Activated CD4-positive, alpha-beta T cell treated with anti-CD3 and anti-CD28 coated beads for 36 hours (primary cell): ENCODE measurements at regions of chr10 and their contacts with region 1.

Region 1: DNA sequence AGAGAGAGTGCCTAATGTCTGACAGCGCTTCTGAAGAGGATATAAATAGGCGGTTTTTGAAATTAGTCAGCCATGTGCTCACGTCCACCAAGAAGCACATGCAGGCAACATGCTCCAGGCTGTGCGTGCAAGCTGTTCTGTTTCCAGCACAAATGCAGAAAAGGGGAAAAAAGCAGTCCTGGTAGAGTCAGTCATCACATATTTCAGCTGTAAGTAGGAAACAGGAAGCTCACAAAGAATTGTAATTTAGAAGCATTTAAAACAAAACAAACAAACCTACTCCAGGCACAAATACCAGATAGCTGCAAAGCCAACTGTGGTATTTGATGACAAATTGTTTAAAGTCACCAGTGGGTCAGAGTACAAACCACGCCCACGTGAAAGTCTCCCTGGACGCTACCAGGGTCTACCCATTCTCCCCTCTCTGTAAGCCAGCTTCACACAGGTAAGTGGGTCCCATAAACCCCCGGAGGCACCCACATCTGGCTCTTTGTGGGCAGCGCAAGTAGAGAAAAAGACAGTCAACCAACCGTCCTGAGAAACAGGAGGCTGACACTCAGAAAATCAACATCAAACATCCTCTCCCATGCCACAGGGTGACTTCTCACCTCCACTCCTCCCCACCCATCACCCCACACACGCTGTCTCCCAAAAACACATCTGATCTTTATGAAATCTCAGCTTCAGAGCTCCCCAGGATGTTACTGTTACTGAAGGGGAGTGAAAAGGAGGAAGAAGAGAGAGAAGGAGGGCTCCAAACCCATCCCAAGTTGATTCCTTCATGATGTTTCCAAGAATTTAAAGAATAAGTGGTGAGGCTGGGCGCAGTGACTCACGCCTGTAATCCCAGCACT is 186.4 kb downstream of the FAM107B start:
- DNase-seq: peak; percentile 77
- ATAC-seq: peak; percentile 70
- H3K4me3 Mint-ChIP-seq: peak overlapping the region; percentile 40
- H3K27ac Mint-ChIP-seq: peak overlapping the region; percentile 89
- H3K4me1 Mint-ChIP-seq: peaks cover 93% of the 10 kb centered on the region
- H3K27me3 Mint-ChIP-seq: no peaks in the 10 kb centered on the region

Region 2: GRCh38 chr10:14564268-14564744 is 24.0 kb before region 1 on chr10:
- CTCF ChIA-PET with region 1: interaction called, 6 read pairs
- POLR2A ChIA-PET with region 1: interaction called, 5 read pairs
- intact Hi-C with region 1: loop called (anchors 1 to 2 kb)
- DNase-seq: no peak
- ATAC-seq: peak; percentile 40
- H3K4me3 Mint-ChIP-seq: peak overlapping the region; percentile 67
- H3K27ac Mint-ChIP-seq: peak overlapping the region; percentile 96
- H3K4me1 Mint-ChIP-seq: peaks cover 92% of the 10 kb centered on the region
- H3K27me3 Mint-ChIP-seq: no peaks in the 10 kb centered on the region

Region 3: DNA sequence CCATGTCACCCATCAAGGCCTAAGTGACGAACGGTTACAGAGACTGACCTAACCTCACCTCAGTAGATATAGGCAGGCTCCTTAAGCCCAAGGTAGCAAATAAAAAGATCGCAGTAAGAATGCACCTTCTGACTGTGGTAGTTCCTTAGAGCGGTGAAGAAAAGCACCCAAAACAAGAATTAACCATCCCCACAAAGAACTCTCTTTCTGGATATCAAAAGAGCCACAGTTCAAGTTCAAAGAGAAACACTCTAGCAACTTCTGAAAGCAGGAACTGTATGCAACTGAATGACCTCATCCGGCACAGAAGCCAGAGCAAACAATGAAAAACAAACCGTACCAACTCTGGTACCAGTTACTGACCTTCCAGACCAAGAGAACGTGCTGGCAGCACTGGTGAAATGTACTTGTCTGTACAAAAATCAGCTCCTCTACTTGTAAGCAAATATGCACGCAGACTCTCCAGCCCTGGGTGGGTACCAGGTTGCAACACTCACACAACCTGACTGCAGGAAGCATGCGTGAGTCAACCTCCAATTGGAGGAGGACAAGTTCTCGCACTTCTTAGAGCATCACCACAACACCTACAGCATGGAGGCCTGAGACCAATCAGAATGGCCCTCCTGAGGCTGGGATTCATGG is 16.3 kb before region 1 on chr10:
- CTCF ChIA-PET with region 1: interaction called, 7 read pairs
- POLR2A ChIA-PET with region 1: interaction called, 8 read pairs
- intact Hi-C with region 1: loop called (anchors 1 kb)
- DNase-seq: peak; percentile 78
- ATAC-seq: peak; percentile 88
- H3K4me3 Mint-ChIP-seq: peak overlapping the region; percentile 66
- H3K27ac Mint-ChIP-seq: peak overlapping the region; percentile 93
- H3K4me1 Mint-ChIP-seq: peaks cover 93% of the 10 kb centered on the region
- H3K27me3 Mint-ChIP-seq: no peaks in the 10 kb centered on the region

Region 4: GRCh38 chr10:14598809-14599764 is 10.8 kb after region 1 on chr10:
- CTCF ChIA-PET with region 1: interaction called, 11 read pairs
- POLR2A ChIA-PET with region 1: interaction called, 4 read pairs
- intact Hi-C with region 1: loop called in 1 of 2 experiments (anchors 1 kb)
- DNase-seq: no peak
- ATAC-seq: no peak
- H3K4me3 Mint-ChIP-seq: no peak overlapping the region
- H3K27ac Mint-ChIP-seq: peak overlapping the region; percentile 27
- H3K4me1 Mint-ChIP-seq: peaks cover 73% of the 10 kb centered on the region
- H3K27me3 Mint-ChIP-seq: no peaks in the 10 kb centered on the region